G401 (cell line): ENCODE measurements at regions of chr16 and their contacts with region 1.

Region 1: DNA sequence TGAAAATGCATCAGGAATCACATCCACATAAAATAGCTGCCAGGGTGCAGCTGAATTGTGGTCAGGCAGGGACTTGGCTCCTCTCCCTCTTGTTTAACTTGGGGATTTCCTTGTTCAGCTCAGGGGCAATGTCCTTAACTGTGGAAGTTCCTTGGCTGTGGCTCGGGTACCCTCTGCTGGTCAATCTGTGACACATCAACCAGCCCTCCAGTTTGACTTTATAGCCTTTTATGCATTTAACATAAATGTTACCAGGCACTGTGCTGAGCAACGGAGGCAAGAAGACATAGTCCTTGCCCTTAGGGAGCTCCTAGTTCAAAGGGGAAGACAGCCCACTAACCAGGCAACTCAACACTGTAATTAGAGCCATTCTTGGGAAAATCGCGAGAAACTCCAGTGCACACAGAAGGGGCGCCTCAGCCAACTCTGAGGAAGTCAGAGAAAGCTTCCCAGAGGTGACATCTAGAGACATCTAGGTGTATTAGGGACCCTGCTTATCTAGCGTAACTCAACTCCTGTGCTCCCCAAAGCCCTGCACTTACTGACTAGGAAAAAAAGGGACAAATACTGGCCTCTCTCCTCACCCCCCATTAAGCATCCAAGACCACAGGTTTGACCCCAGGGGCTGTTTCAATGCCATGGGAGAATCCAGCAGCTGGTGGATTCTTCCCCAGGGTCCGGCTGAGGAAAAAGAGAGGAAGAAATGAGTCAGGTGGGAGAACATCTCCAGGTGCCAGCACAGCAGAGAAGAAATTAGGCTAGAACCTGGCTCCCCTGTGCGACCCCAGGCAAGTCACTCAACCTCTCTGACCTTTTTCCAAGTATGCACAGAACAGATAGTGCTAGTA is 17.3 kb upstream of the EEF2K start:
- DNase-seq: peak; percentile 79

Region 2: DNA sequence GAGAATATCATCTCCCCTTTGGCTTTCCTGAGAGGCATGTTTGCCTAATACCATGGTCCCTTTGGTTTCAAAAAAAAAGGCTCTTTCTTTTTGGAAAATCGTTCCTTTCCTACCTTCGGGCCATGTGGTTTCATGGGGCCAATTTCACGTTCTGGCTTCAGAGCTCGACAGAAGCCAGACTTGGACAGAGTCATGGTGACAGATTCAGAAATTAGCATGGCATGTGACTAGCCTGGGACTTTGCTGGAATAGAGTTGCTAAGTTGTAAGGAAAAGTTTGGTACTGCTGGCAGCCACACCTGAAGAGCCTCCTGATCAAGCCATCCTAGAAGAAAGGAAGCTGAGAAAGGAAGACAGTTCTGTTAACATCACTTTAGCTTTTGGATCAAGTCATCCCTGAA is 98.9 kb before region 1 on chr16:
- in situ Hi-C with region 1: loop called (anchors 5 kb)
- DNase-seq: no peak

Region 3: GRCh38 chr16:22240023-22240710 is 51.3 kb after region 1 on chr16:
- in situ Hi-C with region 1: no loop called
- DNase-seq: no peak